Posterior cingulate gyrus (tissue), 11 donors: ENCODE measurements at regions of chr20 and their contacts with region 1.

Region 1: DNA sequence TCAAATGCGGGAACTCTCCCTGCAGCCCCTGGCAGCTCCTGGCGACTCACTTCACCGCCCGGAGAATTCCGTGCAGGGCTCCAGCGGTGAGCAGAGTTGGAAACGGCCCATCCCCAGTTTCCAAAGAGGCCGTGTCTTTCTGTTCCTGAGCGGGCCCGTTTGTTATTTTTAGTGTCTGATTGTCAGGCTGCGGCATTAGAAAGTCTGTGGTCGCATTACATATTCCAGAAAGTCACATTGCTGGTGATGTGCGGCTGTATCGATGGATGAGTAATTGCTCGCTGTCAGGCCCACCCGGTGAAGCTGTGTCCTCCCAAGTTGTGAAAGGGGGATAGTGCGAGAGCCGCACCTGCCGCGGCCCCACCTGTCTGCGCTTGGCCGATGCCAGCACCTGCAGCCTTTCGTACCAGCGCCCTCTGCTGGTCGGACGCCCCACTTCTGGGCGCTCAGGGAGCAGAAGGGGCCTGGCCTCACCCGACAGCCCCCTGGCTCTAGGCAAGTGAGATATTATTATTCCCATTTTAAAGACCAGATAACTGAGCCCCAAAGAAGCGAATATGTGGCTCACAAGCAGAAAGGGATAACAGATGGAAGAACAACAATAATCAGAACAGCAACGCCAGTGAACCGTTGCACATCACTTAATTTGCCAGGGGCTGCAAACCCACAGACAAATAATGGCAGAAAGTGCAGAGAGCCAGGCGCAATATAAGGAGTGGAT is 244.9 kb downstream of the TSHZ2 start:
- DNase-seq: peak; percentile 31 to 94 (median 70)

Region 2: GRCh38 chr20:52191132-52191915 is 1025.7 kb before region 1 on chr20 and contains the start of gene ZFP64:
- intact Hi-C with region 1: no loop called
- DNase-seq: peak; percentile 74 to 97 (median 84)

Region 3: DNA sequence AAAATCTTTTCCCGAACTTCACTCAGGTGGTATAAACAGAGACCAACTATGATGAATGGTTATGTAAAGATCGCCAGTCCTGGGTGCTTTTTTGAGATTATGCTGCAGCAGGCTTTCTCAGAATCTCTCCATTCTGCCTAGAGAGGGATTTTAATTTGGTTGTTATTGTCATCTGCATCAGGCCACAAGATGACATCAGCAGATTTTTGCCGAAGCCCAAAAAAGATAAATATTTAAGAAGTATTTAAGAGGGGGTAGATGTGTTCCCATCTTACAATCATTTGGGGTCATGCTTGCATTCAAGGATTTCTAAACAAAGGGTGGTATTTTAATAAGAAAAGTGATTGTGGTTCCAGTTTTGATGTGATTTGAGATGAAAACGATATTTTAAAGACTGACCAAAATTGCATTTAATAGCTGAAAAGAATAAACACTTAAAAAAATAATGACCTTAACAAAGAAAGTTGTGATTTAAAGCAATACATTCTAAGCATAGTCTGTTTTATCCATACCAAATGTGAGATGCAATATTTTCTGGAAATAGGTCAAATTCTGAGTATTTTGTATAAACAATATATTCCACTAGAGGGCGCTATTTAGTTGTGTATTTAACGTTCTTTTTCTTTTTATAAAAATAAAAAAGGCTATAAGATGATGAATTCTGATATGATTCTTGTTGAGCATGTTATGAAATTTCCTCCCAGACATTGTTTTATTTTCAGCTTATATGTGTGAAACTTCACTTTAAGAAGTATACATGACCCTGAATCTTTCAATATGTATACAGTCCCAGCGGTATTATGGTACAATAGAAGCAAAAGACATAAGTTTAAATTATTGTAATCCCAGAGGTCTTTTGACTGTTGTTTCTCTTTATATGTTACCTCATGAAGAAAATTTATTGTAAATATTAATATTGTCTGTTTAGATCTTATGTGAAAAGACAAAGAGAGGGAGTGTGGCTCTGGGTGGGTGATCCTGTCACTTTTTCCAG is 974.5 kb before region 1 on chr20:
- intact Hi-C with region 1: loop called (anchors 10 kb)
- DNase-seq: no peak

Region 4: DNA sequence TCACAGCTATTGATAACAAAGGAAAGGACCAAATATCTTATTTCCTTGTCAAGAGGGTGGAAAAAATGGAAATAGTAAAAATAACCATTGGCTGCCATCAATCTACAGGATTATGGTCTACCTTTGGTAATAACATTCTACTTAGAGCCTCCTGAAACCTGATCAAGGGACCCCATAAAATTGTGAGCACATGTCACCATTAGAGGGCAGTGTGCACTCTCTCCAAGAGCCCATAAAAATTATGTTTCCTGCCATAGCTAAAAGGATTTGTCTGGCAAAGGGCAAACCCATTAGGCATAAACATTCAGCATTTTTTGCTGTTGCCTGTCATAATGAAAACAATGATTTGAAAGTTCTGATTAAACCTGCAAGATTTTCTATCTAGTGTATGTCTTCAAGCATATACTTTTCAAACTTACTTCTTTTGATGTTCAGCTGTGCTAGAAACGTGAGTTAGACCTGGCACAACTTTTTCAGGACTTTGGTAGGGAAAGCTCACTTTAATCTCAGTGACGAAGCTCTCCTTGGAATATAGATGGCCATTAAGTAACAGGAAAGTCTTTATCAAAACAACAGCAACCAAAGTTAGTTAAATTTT is 904.8 kb before region 1 on chr20:
- intact Hi-C with region 1: loop called (anchors 2 kb)
- DNase-seq: peak in 1 of 10 donors; percentile 47

Region 5: DNA sequence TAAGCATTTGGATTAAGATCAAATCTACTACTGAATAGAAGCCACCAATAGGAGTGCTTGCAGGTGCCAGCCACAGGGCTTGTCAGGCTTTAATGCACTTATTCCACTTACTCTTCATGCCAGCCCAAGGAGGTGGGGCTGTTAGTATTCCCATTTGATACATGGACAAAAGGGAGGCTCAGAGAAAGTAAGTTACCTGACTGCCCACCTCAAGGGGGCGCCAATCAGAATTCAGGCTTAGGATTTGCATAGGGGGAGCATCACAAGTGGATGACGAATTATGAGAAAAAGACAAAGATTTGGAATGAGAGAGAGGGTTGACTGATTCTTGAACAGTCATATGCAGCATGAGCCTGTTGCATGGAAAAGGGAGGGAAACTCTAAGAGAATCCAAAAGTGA is 433.2 kb before region 1 on chr20:
- intact Hi-C with region 1: no loop called
- DNase-seq: no peak

Region 6: DNA sequence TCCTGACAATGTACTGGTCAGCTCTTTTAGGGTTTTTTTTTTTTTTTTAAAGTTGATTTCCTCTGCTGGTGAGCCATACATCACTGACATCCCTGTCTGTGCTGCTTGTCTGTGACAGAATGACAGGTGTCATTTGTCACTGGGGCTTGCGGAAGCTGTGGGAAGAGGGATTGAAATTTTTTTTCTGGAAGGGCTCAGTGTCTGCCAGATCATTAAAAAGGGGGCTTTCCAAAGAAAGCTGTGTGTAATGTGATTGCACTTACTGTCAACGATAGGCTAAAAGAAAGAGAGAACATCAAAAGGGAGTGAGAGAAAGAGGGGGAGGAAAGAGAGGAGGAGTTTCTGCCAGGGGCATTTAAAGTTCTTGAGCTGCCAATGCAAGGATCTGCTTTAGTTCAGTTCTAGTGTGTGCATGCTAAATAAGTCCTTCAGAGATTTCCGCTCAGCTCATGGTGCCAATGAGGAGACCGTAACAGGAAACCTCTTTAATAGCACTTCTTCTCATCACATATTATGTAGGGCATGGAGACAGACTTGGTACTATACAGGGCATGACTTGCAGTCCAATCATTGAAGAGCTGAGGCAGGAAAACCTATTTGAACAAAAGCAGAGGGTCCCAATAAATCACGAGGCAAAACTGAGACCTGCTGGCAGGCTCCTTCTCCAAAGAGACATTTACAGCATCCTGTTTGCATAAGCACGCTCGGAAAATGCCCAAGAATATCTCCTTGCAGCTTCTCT is 67.7 kb before region 1 on chr20:
- intact Hi-C with region 1: no loop called
- DNase-seq: no peak